Esophagus squamous epithelium (tissue), 5 donors: ENCODE measurements at regions of chr6 and their contacts with region 1.

Region 1: DNA sequence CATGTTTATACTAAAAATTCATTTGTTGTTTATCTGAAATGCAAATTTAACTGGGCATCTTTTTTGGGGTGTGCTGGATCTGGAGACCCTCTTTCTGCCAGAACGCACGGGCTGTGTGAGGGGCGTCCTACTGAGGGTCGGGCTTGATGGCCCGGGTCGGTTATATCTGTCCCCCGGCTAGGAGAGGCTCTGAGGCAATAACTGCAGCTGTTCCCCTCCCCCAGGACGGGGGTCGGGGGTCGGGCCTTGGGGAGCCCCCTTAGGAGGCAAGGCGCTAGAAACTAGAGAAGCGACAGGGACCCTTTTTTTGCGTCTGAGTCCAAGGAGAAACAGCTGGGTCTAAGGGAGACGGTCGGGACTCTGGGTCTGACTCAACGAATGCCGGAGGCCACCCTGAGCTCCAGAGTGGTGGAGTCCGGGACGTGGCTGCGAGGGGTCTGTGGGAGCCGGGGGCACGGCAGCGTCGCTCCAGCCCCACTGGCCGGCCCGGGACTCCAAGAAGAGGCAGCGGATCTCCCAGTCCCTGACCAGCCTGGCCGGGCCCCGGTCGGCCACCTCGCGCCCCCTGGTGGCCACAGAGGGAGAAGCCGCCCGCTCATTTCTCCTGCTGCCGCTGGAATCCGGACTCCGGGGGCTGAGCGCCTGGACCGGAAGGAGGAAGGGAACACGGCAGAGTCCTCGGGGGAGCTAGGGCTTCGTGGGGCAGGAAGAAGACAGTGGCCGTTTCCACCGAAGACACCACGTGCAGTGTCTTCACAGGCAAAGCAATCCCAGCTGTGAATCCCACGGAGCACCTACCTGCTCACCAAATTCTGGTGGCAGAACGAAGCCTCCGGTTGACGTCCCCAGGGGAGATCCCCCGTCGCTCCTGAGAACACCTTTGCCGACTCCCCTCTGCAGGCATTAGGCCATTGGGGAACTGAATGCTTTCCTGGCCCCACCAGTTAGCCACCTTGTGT is 24.0 kb upstream of the SCML4 start:
- DNase-seq: peak; percentile 14
- H3K4me3 ChIP-seq: peak overlapping the region; percentile 12 to 65 (median 40)
- H3K27ac ChIP-seq: no peak overlapping the region
- H3K4me1 ChIP-seq: peaks cover 0 to 13% (median 9%) of the 10 kb centered on the region in 3 donors
- H3K27me3 ChIP-seq: peaks cover 0 to 22% (median 0%) of the 10 kb centered on the region in 4 donors
- CTCF ChIP-seq: peak; percentile 90 to 99 (median 94)
- POLR2A ChIP-seq: no peak

Region 2: GRCh38 chr6:107674995-107675738 is 173.0 kb before region 1 on chr6:
- intact Hi-C with region 1: loop called (anchors 5 kb)
- DNase-seq: peak; percentile 23
- H3K4me3 ChIP-seq: peak overlapping the region in 1 of 4 donors; percentile 24
- H3K27ac ChIP-seq: no peak overlapping the region
- H3K4me1 ChIP-seq: peaks cover 0 to 17% (median 3%) of the 10 kb centered on the region in 3 donors
- H3K27me3 ChIP-seq: no peaks in the 10 kb centered on the region
- CTCF ChIP-seq: peak; percentile 73 to 87 (median 86)
- POLR2A ChIP-seq: no peak

Region 3: GRCh38 chr6:107753778-107754177 is 94.3 kb before region 1 on chr6:
- intact Hi-C with region 1: no loop called
- DNase-seq: no peak
- H3K4me3 ChIP-seq: no peak overlapping the region
- H3K27ac ChIP-seq: no peak overlapping the region
- H3K4me1 ChIP-seq: no peaks in the 10 kb centered on the region
- H3K27me3 ChIP-seq: peaks cover 0 to 5% (median 0%) of the 10 kb centered on the region in 4 donors
- CTCF ChIP-seq: no peak
- POLR2A ChIP-seq: no peak